Activated T-helper 1 cell treated with anti-CD3 and anti-CD28 coated beads, Interleukin-12 subunit alpha, Interleukin-12 subunit beta, Interleukin-2, Interleukin-4 antibody, amounts not matched to agents 30 ng/mL and 10 ng/mL and 1 ng/mL, durations not matched to agents 14 hours and 24 hours and 36 hours (primary cell): ENCODE measurements at regions of chr20 and their contacts with region 1.

Region 1: GRCh38 chr20:35207950-35208611 is 18.4 kb upstream of the MMP24 start:
- DNase-seq: peak; percentile 58
- H3K4me3 Mint-ChIP-seq: no peak overlapping the region
- H3K27ac Mint-ChIP-seq: no peak overlapping the region
- H3K4me1 Mint-ChIP-seq: no peaks in the 10 kb centered on the region
- H3K27me3 Mint-ChIP-seq: no peaks in the 10 kb centered on the region

Region 2: GRCh38 chr20:34834459-34834893 is 373.6 kb before region 1 on chr20:
- intact Hi-C with region 1: loop called (anchors 1 kb)
- DNase-seq: no peak
- H3K4me3 Mint-ChIP-seq: no peak overlapping the region
- H3K27ac Mint-ChIP-seq: no peak overlapping the region
- H3K4me1 Mint-ChIP-seq: no peaks in the 10 kb centered on the region
- H3K27me3 Mint-ChIP-seq: peaks cover 27% of the 10 kb centered on the region

Region 3: GRCh38 chr20:35269055-35269781 is 61.1 kb after region 1 on chr20:
- intact Hi-C with region 1: loop called (anchors 1 kb)
- DNase-seq: peak; percentile 36
- H3K4me3 Mint-ChIP-seq: no peak overlapping the region
- H3K27ac Mint-ChIP-seq: no peak overlapping the region
- H3K4me1 Mint-ChIP-seq: no peaks in the 10 kb centered on the region
- H3K27me3 Mint-ChIP-seq: no peaks in the 10 kb centered on the region

Region 4: DNA sequence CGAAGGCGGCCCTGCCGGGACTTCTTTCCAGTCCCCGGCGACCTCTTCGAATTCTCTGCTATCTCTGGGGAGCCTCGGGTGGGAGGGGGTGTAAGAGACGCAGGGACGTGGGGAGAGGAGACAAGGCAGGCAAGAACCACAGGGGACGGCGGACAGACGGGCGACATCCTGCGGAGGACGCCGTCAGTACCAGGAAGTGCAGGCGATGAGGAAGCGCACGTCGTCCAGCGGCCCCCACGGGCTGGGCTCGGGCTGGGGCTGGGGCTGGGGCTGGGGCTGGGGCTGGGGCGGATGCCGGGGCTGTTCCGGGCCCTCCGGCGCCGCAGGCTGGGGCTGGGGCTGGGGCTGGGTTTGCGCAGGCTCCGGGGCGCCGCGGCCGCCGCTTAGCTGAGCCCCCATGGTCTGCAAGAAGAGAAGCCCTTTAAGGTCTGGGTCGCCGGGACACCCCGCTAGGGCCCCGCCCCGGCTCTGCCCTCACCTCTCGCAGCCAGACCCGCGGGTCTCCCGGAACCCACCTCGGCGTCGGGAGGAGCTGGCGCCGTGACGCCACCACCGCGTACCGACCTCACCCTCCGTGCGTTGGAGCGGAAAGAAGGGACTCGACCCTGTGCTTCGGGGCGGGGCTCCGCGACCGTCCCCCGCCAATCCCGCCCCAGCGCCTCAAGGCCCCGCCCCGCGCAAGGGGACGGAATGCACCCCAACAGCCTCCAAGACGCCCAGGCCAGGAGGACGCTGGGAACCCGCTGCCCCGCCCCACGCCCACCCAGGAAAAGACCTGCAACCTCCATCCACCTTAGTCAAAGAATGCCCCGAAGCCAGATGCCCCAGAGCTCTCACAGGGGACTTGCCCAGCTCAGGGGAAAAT is 69.7 kb after region 1 on chr20 and contains the start of gene MMP24OS:
- intact Hi-C with region 1: loop called (anchors 2 kb)
- DNase-seq: peak; percentile 88
- H3K4me3 Mint-ChIP-seq: peak within 1 kb of the TSS; percentile 98
- H3K27ac Mint-ChIP-seq: peak within 1 kb of the TSS; percentile 99
- H3K4me1 Mint-ChIP-seq: peaks cover 18% of the 10 kb centered on the region
- H3K27me3 Mint-ChIP-seq: no peaks in the 10 kb centered on the region
- total RNA-seq, gene MMP24OS: 25.0 and 27.0 TPM in 2 replicates

Region 5: DNA sequence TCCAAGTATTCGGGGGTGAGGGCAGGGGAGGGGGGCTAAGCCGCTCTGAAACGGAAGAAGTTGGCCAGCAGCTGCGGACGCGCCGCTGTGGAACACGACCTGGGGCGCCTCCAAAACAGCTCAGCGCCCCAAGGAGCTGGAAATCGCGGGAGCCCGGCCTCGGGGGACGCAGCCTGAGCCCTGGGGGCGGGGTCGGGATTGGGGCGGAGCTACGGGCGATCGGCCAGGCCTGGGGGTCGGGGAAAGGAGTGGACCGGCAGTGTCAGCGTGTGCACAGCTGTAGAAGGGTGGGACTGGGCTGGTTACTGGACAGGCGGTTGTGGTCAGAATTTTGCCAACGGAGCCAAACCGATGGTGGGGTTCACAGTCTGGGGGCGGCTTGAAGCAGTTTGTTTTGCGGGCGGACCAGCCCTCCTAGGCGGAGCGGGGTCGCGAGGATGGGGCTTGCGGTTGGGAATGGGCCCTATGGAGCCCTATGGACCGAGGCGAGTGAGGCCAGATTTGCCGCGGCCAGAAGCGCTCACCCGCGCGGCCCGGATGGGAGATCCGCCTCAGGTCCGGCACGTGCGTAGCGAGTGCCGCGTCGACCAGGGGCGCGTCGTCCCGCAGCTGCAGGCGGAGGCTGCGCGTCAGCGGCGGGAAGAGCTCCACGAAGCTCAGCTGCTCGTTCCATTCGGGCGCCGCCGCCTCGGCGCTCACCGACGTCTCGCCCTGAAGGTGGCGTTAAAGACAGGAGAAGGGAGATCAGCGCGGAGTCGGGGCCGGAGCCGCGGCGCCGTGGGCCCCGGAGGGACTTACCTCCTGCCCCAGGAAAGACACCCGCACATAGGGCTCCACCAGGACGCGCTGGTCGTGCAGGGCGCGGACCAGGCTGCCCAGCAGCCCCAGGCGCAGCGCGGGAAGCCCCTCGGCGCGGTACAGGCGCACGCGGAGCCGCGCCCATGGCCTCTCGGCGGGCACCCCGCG is 393.2 kb after region 1 on chr20:
- intact Hi-C with region 1: no loop called
- DNase-seq: peak; percentile 70
- H3K4me3 Mint-ChIP-seq: peak overlapping the region; percentile 72
- H3K27ac Mint-ChIP-seq: peak overlapping the region; percentile 31
- H3K4me1 Mint-ChIP-seq: no peaks in the 10 kb centered on the region
- H3K27me3 Mint-ChIP-seq: peaks cover 32% of the 10 kb centered on the region

Region 6: DNA sequence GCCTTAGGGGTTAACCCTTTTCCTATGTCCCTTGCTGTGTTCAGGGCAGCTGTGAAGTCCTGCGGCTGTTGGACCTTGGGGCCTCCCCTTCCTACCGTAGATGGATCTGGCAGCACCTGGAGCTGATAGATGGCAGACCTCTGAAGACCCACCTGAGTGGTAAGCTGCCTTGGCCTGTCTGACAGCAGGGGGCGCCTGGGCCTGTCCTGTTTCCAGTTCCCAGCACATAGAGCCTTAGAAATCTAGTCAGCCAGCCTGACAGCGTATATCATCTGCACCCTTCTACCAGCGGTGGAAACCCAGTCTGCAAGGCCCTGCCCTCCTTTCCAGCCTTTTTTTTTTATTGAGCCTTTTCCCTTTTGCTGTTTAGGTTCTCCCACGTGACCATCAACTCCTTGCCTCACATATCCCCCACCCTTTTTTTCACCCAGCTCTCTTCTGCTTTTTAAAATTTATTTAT is 786.9 kb after region 1 on chr20:
- intact Hi-C with region 1: no loop called
- DNase-seq: peak; percentile 43
- H3K4me3 Mint-ChIP-seq: no peak overlapping the region
- H3K27ac Mint-ChIP-seq: no peak overlapping the region
- H3K4me1 Mint-ChIP-seq: no peaks in the 10 kb centered on the region
- H3K27me3 Mint-ChIP-seq: peaks cover 12% of the 10 kb centered on the region